Head of caudate nucleus (tissue), 42 donors: ENCODE measurements at regions of chr9 and their contacts with region 1.

Region 1: DNA sequence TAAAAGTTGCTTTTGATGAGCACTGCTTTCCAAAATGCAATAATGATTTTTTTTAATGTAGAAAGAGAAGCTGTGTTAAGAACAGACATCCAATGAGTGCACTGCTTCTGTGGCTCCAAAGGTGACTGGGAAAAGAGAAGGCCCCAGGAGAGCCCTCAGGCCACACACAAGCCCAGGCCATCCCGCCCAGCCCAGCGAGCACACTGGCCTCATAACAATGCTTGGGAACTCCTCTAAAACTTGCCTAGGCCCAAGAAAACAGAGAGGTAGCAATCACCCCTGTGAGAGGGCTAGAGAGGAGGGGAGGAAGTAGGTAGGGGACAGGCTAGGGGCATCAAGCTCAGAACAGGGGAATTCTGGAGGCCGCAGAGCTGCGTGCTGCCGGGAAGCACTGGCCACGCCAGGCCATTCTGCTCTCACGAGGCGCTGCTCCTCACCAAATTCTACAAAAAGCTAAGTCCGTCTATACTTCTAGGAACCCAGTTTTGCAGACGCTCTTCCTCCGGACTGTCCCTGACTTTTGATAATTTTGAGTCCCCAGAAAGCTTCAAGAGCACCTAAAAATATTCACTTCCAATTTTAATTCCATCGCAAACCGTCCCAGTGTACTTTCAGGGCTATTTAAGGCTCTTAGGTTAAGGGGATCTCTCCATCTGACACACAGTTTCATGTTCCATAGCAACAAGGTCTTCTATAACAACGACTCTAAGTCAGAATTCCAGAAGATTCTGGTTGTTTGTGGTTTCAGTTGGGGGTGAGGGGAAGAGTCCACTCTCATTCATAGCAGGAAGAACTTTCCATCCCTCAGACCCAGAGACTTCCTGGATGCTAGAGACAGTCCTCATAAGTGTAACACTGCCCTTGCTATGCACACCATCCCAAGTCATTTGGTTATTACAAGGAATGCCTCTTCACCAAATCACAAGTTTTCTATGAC is 51.0 kb downstream of the HABP4 start:
- DNase-seq: peak in 1 of 42 donors; percentile 42

Region 2: DNA sequence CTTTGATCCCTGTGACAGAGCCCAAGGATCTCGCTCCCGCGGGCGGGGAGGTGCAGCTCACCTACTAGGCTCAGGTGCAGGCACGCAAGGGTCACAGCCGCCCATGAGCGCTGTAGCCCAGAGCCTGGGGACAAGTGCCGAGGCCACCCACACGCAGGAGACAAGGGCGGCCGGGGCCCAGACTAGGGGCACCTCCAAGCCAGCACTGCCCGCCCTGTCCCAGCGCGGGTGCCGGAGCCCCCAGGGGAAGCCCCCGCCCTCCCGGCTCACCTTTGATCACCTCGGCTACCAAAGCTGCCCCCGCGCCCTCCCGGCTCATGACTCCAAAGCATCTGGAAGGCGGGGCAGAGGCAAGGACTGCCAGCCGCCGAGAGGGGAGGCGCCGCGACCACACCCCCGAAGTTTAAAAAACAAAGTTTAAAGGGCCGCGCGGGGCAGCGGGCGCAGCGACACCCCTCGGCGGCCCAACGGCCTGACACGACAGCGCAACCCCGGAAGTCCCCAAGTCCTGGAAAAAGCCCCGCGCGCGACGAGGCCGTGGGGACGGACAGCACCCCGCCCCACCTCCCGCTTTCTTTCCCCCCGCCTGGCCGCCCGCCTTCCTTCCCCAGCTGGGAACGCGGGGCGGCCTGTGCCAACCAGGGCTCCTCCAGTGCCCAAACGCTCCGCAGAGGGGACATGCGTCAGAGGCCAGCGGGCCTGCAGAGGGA is 65.7 kb after region 1 on chr9:
- intact Hi-C with region 1: loop called (anchors 5 kb)
- DNase-seq: peak; percentile 62 to 94 (median 87)